ENCODE measurements at regions of chr20 and their contacts with region 1.

Region 1: GRCh38 chr20:34704177-34705007 is at the start of gene TP53INP2:
- DNase-seq: peak; percentile 86 to 98 (median 92)

Region 2: GRCh38 chr20:34302723-34303528 is 401.5 kb before region 1 on chr20 and contains the start of gene AHCY:
- intact Hi-C with region 1: loop called (anchors 10 kb)
- DNase-seq: peak; percentile 89 to 99 (median 94)

Region 3: GRCh38 chr20:34334654-34335407 is 369.6 kb before region 1 on chr20:
- intact Hi-C with region 1: no loop called
- DNase-seq: peak; percentile 66 to 98 (median 88)

Region 4: DNA sequence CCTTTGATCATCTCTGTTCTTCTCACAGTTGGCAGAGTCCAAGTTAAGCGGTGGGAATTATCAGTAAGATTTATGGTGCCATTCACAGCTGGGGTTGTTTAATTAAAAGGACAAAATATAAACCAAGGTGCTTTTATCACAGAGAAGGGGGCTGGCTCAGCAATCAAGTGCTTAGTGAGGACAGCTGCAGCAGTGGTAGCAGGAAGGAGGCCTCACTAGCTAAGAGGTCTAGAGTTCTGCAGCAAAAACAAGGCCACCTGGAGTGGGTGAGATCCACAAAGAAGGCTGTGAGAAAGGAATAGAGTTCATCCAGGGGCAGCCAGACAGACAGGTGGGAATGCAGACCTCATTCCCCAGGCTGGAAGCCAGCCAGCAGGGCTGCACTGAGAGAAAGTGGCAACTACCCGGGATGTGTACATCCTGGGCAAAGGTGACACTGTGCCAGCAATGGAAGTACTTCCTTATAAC is 64.6 kb before region 1 on chr20:
- intact Hi-C with region 1: loop called (anchors 2 kb)
- DNase-seq: no peak

Region 5: DNA sequence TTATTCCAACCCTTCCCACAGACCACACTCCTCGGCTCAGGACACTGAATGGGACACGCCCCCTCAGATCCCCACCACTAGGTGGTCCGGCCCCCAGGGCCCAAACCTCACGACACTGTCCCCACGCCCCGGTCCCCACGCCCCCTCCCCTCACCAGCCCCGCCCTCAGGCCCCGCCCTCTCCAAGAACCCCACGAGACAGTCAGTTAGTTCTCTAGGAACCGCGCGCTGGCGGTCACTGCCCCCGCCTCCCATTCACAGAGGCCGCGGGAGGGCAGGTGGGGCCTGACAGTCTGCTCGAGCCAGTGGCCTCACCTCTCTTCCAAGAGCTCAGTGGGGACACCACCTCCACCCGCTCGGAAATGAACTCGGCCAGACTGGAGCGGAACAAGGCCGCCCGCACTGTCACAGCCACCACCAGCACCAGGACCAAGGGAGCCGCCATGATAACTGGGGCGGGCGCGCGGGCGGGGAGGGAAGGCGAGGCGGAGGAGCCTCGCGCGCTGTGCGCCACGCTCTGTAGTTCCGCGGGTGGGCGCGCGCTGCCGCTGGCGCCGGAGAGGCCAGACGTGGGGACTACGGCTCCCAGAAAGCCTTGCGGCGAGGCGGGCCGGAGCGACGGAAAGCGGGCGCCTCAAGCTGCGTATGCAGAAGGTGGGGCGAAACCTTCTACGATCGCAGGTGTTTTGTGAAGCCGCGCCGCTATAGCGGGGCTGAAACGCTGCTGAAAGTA is 27.6 kb before region 1 on chr20 and contains the start of gene PIGU:
- intact Hi-C with region 1: loop called (anchors 2 kb)
- DNase-seq: peak; percentile 95 to 99 (median 97)

Measured in posterior cingulate gyrus (tissue), 11 donors.